ENCODE measurements at regions of chr12 and their contacts with region 1.

Region 1: GRCh38 chr12:48542300-48542928 is 17.0 kb downstream of the OR8S1 start:
- DNase-seq: peak in 1 of 2 experiments; percentile 24
- H3K4me3 ChIP-seq: no peak overlapping the region
- H3K27ac ChIP-seq: no peak overlapping the region
- H3K4me1 ChIP-seq: peaks cover 17% of the 10 kb centered on the region; the same call in 1 of the 2 replicates
- H3K27me3 ChIP-seq: peaks cover 6% of the 10 kb centered on the region; the same call in 1 of the 2 replicates
- CTCF ChIP-seq: peak; percentile 57

Region 2: GRCh38 chr12:48340943-48341342 is 201.5 kb before region 1 on chr12:
- CTCF ChIA-PET with region 1: no interaction called
- POLR2A ChIA-PET with region 1: no interaction called
- intact Hi-C with region 1: no loop called
- DNase-seq: no peak
- H3K4me3 ChIP-seq: no peak overlapping the region
- H3K27ac ChIP-seq: no peak overlapping the region
- H3K4me1 ChIP-seq: no peaks in the 10 kb centered on the region
- H3K27me3 ChIP-seq: no peaks in the 10 kb centered on the region
- CTCF ChIP-seq: no peak

Region 3: DNA sequence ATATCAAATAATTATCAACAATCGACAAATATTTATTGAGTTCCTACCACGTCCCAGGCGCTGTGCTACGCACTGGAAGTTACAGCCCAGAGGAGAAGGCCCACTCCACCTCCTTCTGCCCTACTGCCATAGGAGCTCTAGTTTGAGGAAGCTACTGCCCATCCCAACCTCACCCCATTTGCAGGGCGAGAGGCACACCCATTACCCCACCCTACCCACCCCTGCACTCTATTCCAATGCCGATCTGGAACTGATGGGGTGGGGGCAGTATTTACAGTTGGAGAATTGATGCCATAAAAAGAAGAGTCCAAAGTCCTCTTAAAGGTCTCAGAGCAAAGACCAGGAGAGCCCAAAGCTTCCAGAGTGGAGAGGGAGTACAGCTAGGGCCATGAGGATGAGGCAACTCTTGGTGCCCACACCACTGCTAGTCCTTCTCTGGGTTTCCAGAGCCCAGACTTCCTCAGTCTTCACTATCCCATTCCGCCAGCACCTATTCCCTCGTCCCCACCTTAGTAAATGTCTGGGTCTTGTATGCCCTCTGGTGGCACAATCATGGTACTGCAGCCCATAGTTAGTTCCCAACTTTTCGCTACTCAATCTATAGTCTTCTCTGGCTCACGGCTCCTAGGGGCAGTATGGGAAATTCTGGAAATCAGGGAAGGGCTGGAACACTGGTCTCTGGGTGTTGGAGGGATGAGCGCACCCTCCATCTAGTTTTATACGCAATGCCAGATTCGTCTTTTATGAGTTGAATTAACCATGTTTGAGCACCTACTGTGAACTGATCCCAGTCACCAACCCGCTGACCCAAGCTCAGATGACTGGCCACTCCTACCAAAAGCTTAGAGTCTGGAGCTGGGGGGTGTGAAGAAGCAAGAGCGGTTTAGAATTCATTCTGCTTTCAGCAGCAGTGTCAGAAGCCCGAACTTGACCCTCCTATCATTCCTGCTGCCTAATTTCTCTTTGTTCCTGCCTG is 253.4 kb after region 1 on chr12:
- CTCF ChIA-PET with region 1: no interaction called
- POLR2A ChIA-PET with region 1: no interaction called
- intact Hi-C with region 1: loop called (anchors 5 kb)
- DNase-seq: peak; percentile 57 to 67
- H3K4me3 ChIP-seq: no peak overlapping the region
- H3K27ac ChIP-seq: peak overlapping the region; percentile 78
- H3K4me1 ChIP-seq: peaks cover 21% of the 10 kb centered on the region
- H3K27me3 ChIP-seq: no peaks in the 10 kb centered on the region
- CTCF ChIP-seq: peak; percentile 99

Region 4: DNA sequence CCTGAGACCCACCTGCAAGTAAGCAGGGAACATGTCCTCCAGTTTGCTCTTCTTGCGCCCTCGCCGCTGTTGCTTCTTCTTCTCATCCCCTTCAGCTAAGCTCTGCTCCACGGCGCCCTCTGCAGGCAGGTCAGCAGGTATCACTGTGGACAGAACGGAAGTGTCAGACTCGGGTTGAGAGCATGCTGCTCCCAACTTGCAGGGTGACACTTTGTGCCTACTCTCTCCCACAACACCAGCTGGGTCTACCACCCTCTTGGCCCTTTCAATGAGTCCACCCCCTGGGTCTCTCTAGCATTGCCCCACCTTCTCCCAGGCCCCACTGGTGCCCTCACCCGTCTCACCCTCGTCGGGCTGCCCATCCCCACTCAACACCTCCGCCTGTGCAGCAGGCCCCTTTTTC is 501.4 kb after region 1 on chr12:
- CTCF ChIA-PET with region 1: no interaction called
- POLR2A ChIA-PET with region 1: no interaction called
- intact Hi-C with region 1: no loop called
- DNase-seq: peak; percentile 34 to 39
- H3K4me3 ChIP-seq: no peak overlapping the region
- H3K27ac ChIP-seq: no peak overlapping the region
- H3K4me1 ChIP-seq: no peaks in the 10 kb centered on the region
- H3K27me3 ChIP-seq: no peaks in the 10 kb centered on the region
- CTCF ChIP-seq: peak; percentile 69